AG04449 (cell line): ENCODE measurements at regions of chr9 and their contacts with region 1.

Region 1: DNA sequence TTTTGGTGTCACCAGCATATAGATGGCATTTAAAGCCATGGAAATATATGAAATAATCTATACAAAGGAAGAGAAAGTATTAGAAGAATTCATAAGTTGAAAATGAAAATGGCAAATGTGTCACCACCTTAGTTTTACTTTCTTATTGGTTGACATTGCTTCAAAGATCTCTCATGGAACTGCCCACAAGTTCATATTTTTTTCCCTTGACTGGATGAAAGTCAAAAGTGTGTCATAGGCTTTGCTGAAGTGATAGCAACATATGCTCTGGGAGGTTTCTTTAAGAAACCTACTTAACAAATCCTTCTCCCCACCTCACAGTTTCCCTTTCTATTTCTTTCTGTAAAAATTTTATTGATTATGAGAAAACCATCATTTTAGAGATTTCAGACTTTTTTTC is 127.2 kb downstream of the VPS13A start:
- DNase-seq: no peak
- H3K4me3 ChIP-seq: no peak overlapping the region
- CTCF ChIP-seq: no peak

Region 2: GRCh38 chr9:76957258-76957657 is 347.3 kb before region 1 on chr9:
- CTCF ChIA-PET with region 1: no interaction called
- POLR2A ChIA-PET with region 1: no interaction called
- DNase-seq: no peak
- H3K4me3 ChIP-seq: no peak overlapping the region
- CTCF ChIP-seq: no peak

Region 3: DNA sequence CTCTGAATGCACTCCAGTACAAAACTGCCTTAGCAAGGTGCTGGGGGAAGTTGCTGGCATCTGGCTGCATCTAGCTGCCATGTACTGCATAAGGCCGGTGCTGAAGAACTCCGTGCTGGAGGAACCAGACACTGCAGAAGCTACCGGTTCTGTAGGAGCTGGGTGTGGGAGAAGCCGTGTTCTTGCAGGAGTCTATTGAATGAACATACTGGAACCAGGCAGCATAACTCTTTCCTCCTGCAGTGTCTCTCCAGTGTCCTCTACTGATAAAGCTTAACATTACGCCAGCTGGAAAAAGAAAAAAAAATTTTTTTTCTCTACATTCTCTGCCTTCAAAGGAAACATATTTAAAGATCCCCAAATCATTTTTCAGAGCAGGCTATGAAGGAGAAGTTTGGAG is 88.7 kb before region 1 on chr9:
- CTCF ChIA-PET with region 1: no interaction called
- POLR2A ChIA-PET with region 1: no interaction called
- DNase-seq: no peak
- H3K4me3 ChIP-seq: no peak overlapping the region
- CTCF ChIP-seq: peak; percentile 33

Region 4: GRCh38 chr9:77291714-77292113 is 12.8 kb before region 1 on chr9:
- CTCF ChIA-PET with region 1: interaction called, 42 read pairs
- POLR2A ChIA-PET with region 1: no interaction called
- DNase-seq: no peak
- H3K4me3 ChIP-seq: no peak overlapping the region
- CTCF ChIP-seq: peak; percentile 55